ENCODE measurements at regions of chr12 and their contacts with region 1.

Region 1: DNA sequence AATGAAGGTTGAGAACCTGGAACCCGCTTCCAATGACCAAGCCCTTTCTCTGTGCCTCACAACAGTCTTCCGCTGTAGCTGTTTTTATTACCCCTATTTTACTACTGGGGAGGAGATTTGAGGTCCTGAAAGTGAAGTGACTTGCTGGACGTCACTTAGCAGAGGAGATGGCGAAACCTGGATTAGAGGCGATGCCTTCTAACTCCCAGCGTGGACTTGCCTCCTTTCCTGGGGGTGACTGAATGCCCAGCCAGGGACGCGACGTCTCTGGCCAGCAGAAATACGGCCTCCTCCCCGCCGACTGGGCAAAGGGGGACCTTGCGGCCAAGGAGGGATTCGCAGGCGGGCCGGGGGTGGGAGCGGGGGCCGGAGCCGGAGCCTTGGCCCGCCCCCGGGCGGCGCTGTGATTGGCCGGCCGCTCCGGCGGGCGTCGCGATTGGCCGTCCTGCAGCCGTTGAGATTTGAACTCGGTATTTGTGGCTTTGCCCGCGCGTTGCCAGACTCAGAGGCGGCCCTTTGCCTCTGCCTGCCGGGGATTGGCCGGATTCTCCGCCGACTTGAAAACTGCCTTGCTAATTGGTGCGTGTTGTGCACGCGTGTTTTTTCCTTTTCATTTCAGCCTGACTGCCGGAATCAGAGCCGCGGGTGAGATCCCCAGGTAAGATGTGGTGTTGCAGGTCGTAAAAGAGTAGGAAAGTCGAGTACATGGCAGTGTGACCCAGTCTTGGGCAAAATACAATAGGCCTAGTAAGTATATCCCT is at the start of gene NCAPD2:
- DNase-seq: peak; percentile 93 to 98
- H3K4me3 ChIP-seq: peak within 1 kb of the TSS; percentile 87
- H3K27ac ChIP-seq: peak within 1 kb of the TSS; percentile 85
- H3K4me1 ChIP-seq: peaks cover 24% of the 10 kb centered on the region
- H3K27me3 ChIP-seq: no peaks in the 10 kb centered on the region
- CTCF ChIP-seq: peak; percentile 46; the same call in 1 of the 2 replicates
- total RNA-seq, gene NCAPD2: 220 and 266 TPM in 2 replicates

Region 2: GRCh38 chr12:6507102-6507998 is 13.7 kb after region 1 on chr12:
- CTCF ChIA-PET with region 1: no interaction called
- POLR2A ChIA-PET with region 1: interaction called, 15 read pairs
- intact Hi-C with region 1: no loop called
- DNase-seq: no peak
- H3K4me3 ChIP-seq: no peak overlapping the region
- H3K27ac ChIP-seq: no peak overlapping the region
- H3K4me1 ChIP-seq: no peaks in the 10 kb centered on the region
- H3K27me3 ChIP-seq: no peaks in the 10 kb centered on the region
- CTCF ChIP-seq: no peak